ENCODE measurements at regions of chr1 and their contacts with region 1.

Region 1: GRCh38 chr1:26555550-26556510 is 26.3 kb downstream of the RPS6KA1 start:
- DNase-seq: no peak
- H3K4me3 ChIP-seq: no peak overlapping the region
- H3K27ac ChIP-seq: no peak overlapping the region
- H3K4me1 ChIP-seq: no peaks in the 10 kb centered on the region; a peak in 1 of 4 replicates
- H3K27me3 ChIP-seq: no peaks in the 10 kb centered on the region
- CTCF ChIP-seq: no peak
- EP300 ChIP-seq: no peak
- RAD21 ChIP-seq: no peak

Region 2: GRCh38 chr1:26399034-26399433 is 156.8 kb before region 1 on chr1:
- CTCF ChIA-PET with region 1: no interaction called
- POLR2A ChIA-PET with region 1: no interaction called
- DNase-seq: no peak
- H3K4me3 ChIP-seq: no peak overlapping the region
- H3K27ac ChIP-seq: no peak overlapping the region
- H3K4me1 ChIP-seq: no peaks in the 10 kb centered on the region
- H3K27me3 ChIP-seq: no peaks in the 10 kb centered on the region
- CTCF ChIP-seq: no peak
- EP300 ChIP-seq: no peak
- RAD21 ChIP-seq: no peak

Region 3: DNA sequence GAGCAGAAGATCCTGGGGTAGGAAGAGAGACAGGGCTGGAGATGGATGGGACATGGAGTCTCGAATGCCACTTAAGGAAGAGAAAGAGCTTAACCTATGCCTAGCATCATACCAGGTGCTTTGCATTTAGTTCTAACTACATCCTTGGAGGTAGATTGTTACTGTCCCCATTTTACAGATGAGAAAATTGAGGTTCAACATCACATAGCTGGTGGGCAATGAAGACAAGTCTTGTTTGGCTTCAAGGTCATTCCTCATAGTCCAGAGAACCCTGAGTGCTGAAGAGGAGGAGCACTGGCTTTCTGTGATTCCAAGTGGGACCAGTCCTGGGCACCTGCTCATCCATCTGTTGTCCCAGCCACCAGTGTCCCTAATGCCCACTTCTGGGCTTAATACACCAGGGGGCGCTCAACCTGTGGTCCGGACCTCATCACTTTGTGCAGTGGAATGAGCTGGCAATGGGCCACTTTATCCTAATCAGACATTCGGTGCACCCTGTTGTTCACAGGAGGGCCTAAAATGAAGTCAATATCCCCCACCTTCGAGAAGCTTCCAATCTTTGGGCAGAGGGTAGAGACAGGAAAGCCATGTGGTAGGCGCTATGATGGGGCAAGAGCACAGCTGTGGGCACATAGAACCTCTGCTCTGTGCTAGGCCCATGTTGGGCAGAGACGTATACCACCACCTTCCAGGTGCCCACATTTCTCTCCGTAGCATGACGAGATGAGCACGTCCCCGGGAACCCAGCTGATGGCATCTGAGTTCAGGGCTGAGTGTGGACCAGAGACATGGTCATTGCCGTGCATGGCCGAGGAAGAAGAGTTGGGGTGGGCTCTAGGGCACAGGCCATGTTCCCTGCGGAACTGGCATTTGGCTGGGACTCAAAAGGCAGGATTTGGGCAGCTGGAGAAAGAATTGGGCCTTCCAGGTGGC is 17.1 kb before region 1 on chr1:
- CTCF ChIA-PET with region 1: interaction called, 13 read pairs
- POLR2A ChIA-PET with region 1: no interaction called
- DNase-seq: peak; percentile 69
- H3K4me3 ChIP-seq: no peak overlapping the region
- H3K27ac ChIP-seq: no peak overlapping the region
- H3K4me1 ChIP-seq: peaks cover 0 to 2% of the 10 kb centered on the region in 2 experiments; a peak in 1 of 4 replicates
- H3K27me3 ChIP-seq: no peaks in the 10 kb centered on the region
- CTCF ChIP-seq: peak; percentile 66
- EP300 ChIP-seq: no peak
- RAD21 ChIP-seq: no peak

Region 4: DNA sequence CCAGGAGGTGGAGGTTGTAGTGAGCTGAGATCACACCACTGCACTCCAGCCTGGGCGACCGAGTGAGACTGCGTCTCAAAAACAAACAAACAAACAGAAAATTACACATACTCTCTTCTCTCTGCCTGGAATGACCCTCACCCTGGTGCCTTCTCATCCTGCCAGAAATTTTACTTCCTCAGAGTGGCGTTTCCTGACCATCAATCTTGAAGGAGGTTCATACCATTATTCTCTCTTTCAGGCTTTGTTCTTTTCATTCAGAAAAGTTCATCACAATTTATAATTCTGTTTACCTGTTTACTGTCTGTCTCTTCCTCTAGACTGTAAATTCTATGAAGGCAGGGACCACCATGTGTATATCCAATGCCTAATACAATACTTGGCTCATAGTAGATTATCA is 53.1 kb after region 1 on chr1:
- CTCF ChIA-PET with region 1: no interaction called
- POLR2A ChIA-PET with region 1: no interaction called
- DNase-seq: no peak
- H3K4me3 ChIP-seq: no peak overlapping the region
- H3K27ac ChIP-seq: no peak overlapping the region
- H3K4me1 ChIP-seq: no peaks in the 10 kb centered on the region
- H3K27me3 ChIP-seq: no peaks in the 10 kb centered on the region
- CTCF ChIP-seq: no peak
- EP300 ChIP-seq: no peak
- RAD21 ChIP-seq: no peak